ENCODE measurements at regions of chr11 and their contacts with region 1.

Region 1: GRCh38 chr11:58524232-58525036 is 16.5 kb upstream of the OR5B21 start:
- DNase-seq: peak; percentile 64
- H3K4me3 Mint-ChIP-seq: peak overlapping the region; percentile 63
- H3K27ac Mint-ChIP-seq: peak overlapping the region; percentile 82
- H3K4me1 Mint-ChIP-seq: peaks cover 47% of the 10 kb centered on the region
- H3K27me3 Mint-ChIP-seq: no peaks in the 10 kb centered on the region

Region 2: DNA sequence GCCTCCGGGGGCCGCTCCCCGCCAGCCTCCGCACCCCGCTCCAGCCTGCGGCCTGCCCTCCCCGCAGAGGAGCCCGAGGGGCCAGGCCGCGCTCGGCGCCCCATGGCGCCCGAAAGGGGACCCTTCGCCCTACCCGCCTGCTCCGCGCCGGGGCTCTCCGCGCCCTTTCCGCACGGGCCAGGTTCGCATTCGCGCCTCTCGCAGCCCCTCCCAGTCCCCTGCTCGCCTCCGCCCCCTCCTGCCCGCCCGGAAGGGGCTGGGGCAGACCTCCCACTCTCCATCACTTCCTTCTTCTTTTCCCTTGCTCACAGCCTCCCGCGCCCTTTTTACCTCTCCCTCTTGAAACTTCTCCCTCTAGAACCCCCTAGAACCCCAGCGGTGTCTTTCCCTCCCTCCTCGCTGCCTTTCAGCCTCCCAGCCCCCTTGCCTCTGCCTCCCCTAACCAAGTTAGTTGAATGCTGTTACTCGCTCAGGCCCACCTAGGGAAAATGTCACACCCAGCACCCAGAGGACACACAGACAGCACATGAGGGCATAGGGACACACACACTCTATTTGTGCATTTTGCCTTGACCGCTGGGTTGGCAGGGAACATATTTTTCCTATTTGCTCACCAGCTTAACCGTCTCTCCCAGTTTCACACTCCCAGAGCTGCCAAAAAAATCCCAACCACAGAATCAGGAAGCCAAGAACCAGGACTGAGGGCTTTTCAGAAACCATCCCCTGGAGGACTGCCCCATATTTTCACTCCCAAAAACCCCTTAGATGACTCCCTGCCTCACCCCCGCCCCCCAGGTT is 1097.3 kb before region 1 on chr11 and contains the start of gene SLC43A3:
- CTCF ChIA-PET with region 1: no interaction called
- POLR2A ChIA-PET with region 1: no interaction called
- intact Hi-C with region 1: loop called (anchors 1 kb)
- DNase-seq: peak; percentile 87
- H3K4me3 Mint-ChIP-seq: peak within 1 kb of the TSS; percentile 96
- H3K27ac Mint-ChIP-seq: peak within 1 kb of the TSS; percentile 92
- H3K4me1 Mint-ChIP-seq: peaks cover 41% of the 10 kb centered on the region
- H3K27me3 Mint-ChIP-seq: no peaks in the 10 kb centered on the region
- total RNA-seq, gene SLC43A3: 170 to 186 TPM

Region 3: DNA sequence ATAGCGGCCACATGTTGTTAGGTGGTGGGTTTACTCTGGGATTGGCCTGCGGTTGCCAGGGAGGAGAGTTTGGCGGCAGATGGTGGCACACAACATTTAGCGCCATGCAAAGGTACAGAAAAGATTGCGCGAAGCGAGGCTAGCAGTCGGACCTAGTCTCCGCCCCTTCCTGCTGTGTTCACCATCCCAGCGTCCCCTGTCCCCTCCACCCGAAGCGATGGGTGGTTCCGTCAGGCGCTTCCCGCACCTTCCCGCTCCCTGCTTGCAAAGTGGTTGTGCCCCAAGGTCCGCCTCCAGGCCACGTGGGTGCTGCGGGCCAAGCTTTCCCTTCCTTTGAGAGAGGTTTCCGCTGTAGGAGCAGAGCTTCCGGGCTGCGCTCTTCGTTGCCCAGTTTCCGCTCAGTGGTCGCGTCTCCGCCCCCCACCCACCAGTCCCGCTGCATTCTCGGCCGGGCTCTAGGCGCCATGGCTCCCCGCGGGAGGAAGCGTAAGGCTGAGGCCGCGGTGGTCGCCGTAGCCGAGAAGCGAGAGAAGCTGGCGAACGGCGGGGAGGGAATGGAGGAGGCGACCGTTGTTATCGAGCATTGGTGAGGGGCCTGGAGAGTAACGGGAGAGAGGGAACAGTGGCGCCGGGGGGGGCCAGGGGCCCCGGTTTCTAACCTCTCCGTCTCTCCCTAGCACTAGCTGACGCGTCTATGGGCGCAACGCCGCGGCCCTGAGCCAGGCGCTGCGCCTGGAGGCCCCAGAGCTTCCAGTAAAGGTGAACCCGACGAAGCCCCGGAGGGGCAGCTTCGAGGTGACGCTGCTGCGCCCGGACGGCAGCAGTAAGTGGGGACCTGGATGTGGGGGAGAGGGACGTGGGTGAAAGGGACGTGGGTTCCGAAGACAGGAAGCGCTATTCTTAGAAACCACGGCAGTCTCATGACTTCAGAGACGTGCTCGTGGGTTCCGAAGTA is 783.0 kb before region 1 on chr11 and contains the start of gene SELENOH:
- CTCF ChIA-PET with region 1: interaction called, 5 read pairs
- POLR2A ChIA-PET with region 1: no interaction called
- intact Hi-C with region 1: loop called (anchors 1 kb)
- DNase-seq: peak; percentile 98
- H3K4me3 Mint-ChIP-seq: peak within 1 kb of the TSS; percentile 97
- H3K27ac Mint-ChIP-seq: peak within 1 kb of the TSS; percentile 99
- H3K4me1 Mint-ChIP-seq: peaks cover 40% of the 10 kb centered on the region
- H3K27me3 Mint-ChIP-seq: no peaks in the 10 kb centered on the region
- total RNA-seq, gene SELENOH: 235 to 252 TPM

Region 4: DNA sequence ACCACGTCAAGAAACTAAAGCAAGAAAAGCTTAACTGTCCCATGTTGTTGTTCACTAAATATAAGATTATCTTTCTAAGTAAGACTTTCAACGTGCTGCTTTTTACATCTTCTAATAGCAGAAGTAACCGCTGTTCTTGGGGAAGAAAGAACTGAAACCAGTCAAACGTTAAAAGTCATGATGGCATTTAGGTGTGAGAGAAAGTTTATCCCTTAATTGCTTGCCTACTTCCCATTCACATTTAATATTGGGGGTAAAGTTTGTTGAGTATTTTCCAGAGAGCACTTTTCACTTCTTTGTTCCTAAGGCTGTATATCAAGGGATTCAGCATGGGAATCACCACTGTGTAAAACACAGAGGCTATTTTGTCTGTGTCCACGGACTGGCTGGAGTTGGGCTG is 17.5 kb before region 1 on chr11:
- CTCF ChIA-PET with region 1: interaction called, 21 read pairs
- POLR2A ChIA-PET with region 1: interaction called, 6 read pairs
- intact Hi-C with region 1: loop called (anchors 1 kb)
- DNase-seq: no peak
- H3K4me3 Mint-ChIP-seq: no peak overlapping the region
- H3K27ac Mint-ChIP-seq: no peak overlapping the region
- H3K4me1 Mint-ChIP-seq: peaks cover 20% of the 10 kb centered on the region
- H3K27me3 Mint-ChIP-seq: no peaks in the 10 kb centered on the region

Region 5: DNA sequence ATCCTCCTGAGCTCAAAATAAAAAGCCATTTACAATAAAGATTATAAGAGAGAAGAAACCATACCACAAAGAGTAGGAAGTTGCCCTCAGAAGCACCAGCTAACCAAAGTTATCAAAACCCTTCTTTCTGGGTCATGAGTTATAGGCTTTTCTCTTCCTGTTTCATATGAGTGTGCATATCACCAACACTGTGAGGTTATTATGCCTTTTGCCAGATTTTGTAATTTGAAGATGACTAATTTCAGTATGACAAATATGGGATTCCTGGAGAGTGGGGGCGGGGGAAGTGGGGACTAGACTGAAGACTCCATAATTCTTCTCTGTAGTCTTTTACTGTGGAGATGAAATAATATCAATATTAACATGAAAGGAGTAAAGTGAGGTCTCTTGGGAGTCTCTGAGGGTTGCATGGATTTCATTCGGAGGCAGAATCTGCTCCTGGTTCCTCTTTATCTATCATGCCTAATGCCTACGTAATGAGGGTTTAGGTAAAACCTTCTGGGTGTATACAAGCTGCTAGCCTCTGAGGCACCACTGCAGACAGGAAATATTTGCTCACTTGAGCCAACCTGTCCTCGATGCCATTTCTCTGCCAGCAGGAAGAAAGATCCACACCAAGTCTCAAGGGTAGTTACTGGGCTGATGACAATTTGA is 49.1 kb after region 1 on chr11:
- CTCF ChIA-PET with region 1: interaction called, 32 read pairs
- POLR2A ChIA-PET with region 1: interaction called, 4 read pairs
- intact Hi-C with region 1: loop called (anchors 1 kb)
- DNase-seq: peak; percentile 82
- H3K4me3 Mint-ChIP-seq: peak overlapping the region; percentile 87
- H3K27ac Mint-ChIP-seq: peak overlapping the region; percentile 100
- H3K4me1 Mint-ChIP-seq: peaks cover 46% of the 10 kb centered on the region
- H3K27me3 Mint-ChIP-seq: no peaks in the 10 kb centered on the region

Region 6: DNA sequence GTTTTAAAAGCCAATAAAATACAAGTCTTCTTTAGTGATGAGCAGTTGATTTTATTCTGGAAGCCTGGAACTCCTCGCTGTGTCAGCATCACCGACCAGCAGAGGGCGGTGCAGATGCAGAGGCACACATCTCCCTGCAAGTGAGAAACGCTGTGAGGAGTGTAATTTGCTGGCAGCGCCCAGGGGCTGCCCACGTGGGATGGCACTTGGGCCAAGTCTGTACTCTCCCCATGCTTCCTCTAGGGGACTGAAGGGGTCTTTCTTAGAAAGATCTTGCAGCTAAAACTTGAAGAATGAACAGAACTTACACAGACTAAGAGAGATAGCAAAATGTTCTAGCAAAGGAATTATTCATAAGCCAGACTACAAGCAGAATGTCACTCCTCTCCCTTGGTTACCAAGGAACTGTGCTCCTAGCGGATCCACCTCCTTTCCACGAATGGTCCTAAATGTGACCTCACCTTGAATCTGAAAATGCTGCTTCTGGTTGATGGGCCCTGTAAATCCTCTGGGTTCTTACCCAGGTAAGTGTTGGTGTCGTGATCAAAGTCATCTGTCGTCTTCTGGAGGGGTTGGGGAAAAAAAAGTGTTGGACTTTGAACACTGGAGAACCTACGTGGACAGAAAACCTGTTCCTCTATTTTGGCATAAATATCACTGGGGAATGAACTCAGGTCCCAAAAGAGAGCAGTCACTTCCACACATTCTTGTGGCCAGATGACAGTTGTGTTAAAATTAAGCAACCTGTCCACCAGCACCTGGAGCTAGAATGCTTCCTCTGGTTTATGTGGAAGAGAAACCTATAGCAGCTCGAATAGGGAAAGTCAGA is 129.9 kb after region 1 on chr11:
- CTCF ChIA-PET with region 1: interaction called, 10 read pairs
- POLR2A ChIA-PET with region 1: no interaction called
- intact Hi-C with region 1: no loop called
- DNase-seq: peak; percentile 85
- H3K4me3 Mint-ChIP-seq: no peak overlapping the region
- H3K27ac Mint-ChIP-seq: no peak overlapping the region
- H3K4me1 Mint-ChIP-seq: peaks cover 18% of the 10 kb centered on the region
- H3K27me3 Mint-ChIP-seq: peaks cover 1% of the 10 kb centered on the region

Measured in activated CD4-positive, alpha-beta memory T cell treated with anti-CD3 and anti-CD28 coated beads for 36 hours (primary cell).